Right ventricle myocardium inferior (tissue), 1 donor: ENCODE measurements at regions of chr16 and their contacts with region 1.

Region 1: DNA sequence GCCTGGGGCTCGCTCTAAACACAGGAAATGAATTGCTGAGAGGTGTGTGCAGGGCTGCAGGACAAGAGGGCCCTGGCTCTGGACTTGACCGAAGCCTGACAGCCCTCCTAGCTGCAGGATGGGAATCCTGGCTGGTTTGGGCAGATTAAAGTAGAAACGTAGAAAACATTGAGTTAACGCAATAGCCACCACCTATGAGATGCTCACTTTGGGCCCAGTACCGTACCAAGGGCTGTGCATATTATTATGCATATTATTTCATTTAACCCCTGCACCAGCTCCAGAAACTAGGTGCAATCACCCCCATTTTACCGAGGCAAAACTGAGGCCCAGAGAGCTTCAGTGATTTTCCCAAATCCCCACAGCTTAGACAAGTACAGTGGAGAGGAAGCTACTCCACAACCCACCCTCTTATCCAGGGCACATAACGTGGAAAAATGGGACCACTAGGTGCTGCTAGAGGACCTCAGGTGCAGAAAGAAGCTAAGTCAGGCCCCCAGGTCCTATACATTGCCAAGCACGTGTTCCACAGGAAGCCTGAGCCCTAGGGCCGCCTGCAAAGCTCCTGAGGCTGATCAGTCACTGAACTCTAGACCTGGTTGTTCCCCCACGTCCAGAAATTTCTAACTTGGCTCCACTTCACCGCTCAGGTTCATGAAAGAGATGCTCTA is 79.2 kb downstream of the MYH11 start:
- DNase-seq: no peak
- ATAC-seq: no peak

Region 2: DNA sequence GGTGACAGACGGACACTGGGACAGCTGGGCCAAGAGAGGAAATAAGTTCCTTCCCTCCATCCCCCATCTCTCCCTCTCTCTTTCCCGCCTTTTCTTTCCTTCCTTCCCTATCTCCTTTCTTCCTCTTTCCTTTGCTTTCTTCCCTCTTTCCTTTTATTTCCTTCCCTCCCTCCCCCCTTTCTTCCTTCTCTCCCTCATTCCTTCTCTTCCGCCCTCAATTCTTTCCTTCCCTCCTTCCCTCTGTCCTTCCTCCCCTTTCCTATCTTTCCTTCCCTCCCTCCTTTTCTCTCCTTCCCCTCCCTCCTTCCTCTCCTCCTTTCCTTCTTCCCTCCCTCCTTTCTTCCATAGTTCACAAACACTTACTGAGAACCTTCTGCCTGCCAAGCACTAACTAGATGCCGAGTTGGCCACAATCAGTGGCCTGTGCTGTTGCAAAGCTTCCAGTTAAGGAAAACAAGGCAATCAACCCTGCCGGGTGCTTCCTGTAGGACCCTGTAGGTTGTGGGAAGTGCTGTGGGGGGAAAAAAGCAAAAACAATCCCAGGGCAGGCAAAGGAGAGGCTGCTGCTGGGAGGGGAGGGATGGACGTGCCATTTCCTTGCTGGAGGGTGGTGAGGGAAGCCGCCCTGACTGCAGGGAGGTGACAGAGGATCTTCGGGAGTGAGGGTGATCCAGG is 414.0 kb after region 1 on chr16:
- intact Hi-C with region 1: loop called (anchors 5 kb)
- DNase-seq: no peak
- ATAC-seq: no peak